ENCODE measurements at regions of chr16 and their contacts with region 1.

Region 1: DNA sequence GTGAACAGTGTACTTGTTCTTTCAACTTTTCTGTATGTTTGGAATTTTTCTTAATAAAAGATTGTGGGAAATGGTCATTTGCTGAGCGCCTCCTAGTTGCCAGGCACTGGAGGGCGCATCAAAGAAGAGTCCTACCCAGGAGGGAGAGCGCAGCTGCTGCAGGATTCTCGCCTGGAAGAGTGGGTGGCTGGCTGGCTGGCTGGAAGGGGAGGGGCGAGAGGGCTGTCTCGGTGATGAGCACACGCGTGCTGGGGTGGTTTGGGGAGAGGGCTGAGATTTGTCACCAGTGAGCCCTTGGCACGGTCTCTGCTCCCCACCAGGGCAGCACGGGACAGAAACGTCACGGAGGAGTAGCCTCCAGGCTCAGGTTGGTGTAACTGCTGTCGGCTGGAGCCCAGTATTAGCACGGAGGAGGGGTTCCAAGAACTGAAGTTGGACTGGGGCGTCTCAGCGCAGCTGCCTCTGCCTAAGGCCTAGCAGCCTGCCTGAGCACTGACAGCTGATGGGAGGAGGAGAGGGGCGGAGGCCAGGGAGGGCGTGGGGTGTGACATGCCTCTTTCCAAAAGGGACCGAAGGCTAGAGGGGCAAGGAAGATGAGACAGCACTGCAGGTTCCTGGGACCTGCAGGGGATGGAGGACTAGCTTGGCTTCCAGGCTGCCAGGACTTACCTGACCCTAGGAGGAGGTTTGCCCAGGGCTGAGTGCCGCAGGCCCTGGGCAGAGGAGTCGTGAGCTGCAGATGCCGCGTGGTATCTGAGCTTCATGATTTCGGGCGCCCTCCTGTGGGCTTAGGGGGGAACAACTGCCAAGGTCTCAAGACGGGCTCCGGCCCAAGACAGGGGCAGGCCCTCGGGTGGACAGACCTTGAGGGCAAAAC is 5.7 kb downstream of the LDHD start:
- DNase-seq: peak; percentile 83 to 91
- H3K4me3 ChIP-seq: peak overlapping the region in 1 of 4 experiments; percentile 31; a peak in 2 of 8 replicates
- H3K27ac ChIP-seq: no peak overlapping the region
- H3K4me1 ChIP-seq: peaks cover 9 to 52% (median 40%) of the 10 kb centered on the region in 4 experiments
- H3K27me3 ChIP-seq: no peaks in the 10 kb centered on the region
- CTCF ChIP-seq: peak; percentile 81 to 92 (median 92)
- EP300 ChIP-seq: no peak
- POLR2A ChIP-seq: no peak; a peak in 1 of 3 replicates
- RAD21 ChIP-seq: peak; percentile 88 to 95

Region 2: DNA sequence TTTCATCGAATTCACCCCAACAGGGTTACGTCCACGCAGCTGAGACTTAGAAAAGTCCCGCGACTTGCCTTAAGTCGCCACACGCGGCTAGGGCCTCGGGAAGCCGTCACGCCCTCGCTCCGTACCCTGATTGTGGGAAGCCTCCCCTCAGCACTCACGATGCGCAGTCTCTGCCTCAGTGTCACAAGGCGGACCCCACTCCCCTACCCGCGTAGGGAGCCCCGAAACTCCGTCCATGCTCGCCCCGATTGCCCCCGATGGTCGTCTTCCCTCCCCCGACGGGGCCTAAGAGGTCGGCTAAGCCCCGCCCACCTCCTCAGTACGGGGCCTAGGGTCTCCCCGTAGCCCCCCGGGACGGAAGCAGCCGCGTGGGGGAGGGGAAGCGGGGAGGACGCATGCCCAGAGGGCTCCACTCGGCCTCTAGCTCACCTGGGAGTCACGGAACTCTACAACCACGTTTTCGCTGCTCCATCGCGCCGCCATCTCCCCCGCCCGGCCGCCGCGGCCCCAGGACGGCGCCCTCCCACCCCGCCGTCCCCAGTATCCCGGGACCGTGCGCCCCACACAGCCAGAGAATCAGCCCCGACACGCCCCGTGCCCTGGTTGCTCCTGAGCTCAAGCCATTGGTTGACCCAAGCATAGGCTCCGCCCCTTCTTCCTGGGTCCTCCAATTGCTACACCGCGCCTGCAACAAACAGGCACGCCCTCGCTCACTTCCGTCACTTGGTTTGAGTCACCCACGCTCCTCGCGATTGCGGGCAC is 126.2 kb before region 1 on chr16 and contains the start of gene WDR59:
- CTCF ChIA-PET with region 1: interaction called, 36 read pairs
- POLR2A ChIA-PET with region 1: interaction called, 3 read pairs
- DNase-seq: peak; percentile 97 to 98
- H3K4me3 ChIP-seq: peak within 1 kb of the TSS; percentile 76 to 91 (median 87)
- H3K27ac ChIP-seq: peak within 1 kb of the TSS; percentile 86
- H3K4me1 ChIP-seq: no peaks in the 10 kb centered on the region
- H3K27me3 ChIP-seq: no peaks in the 10 kb centered on the region
- CTCF ChIP-seq: no peak
- EP300 ChIP-seq: no peak
- POLR2A ChIP-seq: peak; percentile 82 to 84
- RAD21 ChIP-seq: no peak
- total RNA-seq, gene WDR59: 107 and 124 TPM in 2 replicates

Region 3: DNA sequence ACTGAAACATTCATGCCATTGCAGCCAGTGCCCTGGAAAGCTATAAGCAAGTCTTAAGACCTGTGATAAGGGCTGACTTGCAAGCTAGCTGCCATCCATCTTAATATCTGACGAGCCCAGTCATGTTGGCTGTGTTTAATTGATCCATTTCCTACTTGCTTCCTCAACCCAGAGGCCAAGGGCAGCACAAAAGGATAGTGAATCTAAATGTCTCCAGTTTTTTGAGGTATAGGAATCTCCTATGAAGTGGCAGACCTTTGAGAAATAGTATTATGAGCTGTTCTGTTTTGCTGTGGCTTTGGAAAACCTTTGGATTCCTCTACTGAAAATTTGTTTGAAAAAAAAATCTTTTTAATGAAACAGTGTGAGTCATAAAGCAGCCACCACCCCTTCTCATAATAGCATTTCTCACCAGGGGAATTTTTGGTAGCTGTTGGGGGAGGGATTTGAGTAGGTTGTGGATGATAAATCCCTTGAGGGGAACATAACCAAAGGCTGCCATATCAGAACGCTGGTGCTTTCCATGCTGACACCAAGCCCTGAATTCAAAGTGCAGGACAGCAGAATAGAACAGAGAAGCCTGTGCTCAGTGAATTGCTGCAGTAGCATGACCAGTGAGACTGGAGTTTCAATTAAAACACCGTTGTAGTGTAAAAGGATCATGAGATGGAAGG is 99.1 kb before region 1 on chr16:
- CTCF ChIA-PET with region 1: interaction called, 44 read pairs
- POLR2A ChIA-PET with region 1: no interaction called
- DNase-seq: no peak
- H3K4me3 ChIP-seq: no peak overlapping the region
- H3K27ac ChIP-seq: no peak overlapping the region
- H3K4me1 ChIP-seq: peaks cover 0 to 14% (median 3%) of the 10 kb centered on the region in 4 experiments; a peak in 4 of 7 replicates
- H3K27me3 ChIP-seq: no peaks in the 10 kb centered on the region
- CTCF ChIP-seq: no peak
- EP300 ChIP-seq: no peak
- POLR2A ChIP-seq: no peak
- RAD21 ChIP-seq: no peak

Region 4: GRCh38 chr16:75080205-75081029 is 30.5 kb before region 1 on chr16:
- CTCF ChIA-PET with region 1: interaction called, 90 read pairs
- POLR2A ChIA-PET with region 1: interaction called, 3 read pairs
- DNase-seq: no peak
- H3K4me3 ChIP-seq: peak overlapping the region in 1 of 4 experiments; percentile 39; a peak in 4 of 8 replicates
- H3K27ac ChIP-seq: no peak overlapping the region
- H3K4me1 ChIP-seq: peaks cover 0 to 12% (median 10%) of the 10 kb centered on the region in 4 experiments; a peak in 6 of 7 replicates
- H3K27me3 ChIP-seq: no peaks in the 10 kb centered on the region
- CTCF ChIP-seq: no peak
- EP300 ChIP-seq: peak in 1 of 2 experiments; percentile 29; a peak in 1 of 3 replicates
- POLR2A ChIP-seq: no peak
- RAD21 ChIP-seq: no peak

Region 5: DNA sequence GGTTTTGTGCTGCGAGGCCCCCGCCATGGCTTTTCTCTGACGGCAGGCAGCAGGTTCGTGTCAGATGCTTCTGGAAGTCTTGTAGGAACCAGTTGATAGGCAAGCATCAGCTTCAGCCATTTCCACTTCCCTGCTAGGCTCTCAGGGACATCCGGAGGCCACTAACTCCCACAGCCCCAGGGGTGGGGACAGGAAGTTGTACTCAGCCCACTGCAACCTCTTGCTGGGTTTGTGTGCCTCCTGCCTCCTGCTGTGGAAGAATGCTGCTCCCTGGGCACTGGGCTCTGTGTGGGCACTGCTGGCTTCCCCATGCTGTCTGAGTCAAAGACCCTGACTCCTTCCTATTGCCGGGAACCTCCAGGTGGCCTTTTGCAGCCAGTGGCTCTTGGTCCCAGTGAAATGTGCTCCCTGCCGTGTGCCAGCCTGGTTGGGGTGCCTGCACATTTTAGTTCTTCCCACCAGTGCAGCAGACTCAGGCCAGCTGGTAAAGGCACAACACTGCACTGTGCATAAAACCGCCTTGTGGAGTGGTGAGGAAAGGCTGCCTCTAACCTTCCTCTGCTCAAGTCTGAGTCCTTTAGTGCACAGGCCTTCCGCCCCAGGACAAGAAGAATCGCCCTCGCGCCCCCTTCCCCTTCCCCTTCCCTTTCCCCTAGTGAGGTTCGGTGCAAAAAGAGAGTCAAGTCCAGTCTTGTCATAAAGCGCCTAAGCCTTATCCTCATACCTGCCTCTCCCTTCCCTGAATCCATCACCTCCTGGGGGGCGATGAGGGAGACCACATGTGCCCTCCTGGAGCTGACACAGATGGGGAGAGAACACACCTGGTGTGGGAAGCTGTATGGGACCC is 10.9 kb before region 1 on chr16:
- CTCF ChIA-PET with region 1: interaction called, 133 read pairs
- POLR2A ChIA-PET with region 1: interaction called, 42 read pairs
- DNase-seq: no peak
- H3K4me3 ChIP-seq: no peak overlapping the region
- H3K27ac ChIP-seq: no peak overlapping the region
- H3K4me1 ChIP-seq: peaks cover 9 to 45% (median 32%) of the 10 kb centered on the region in 4 experiments
- H3K27me3 ChIP-seq: no peaks in the 10 kb centered on the region
- CTCF ChIP-seq: no peak
- EP300 ChIP-seq: no peak
- POLR2A ChIP-seq: no peak
- RAD21 ChIP-seq: no peak

Region 6: DNA sequence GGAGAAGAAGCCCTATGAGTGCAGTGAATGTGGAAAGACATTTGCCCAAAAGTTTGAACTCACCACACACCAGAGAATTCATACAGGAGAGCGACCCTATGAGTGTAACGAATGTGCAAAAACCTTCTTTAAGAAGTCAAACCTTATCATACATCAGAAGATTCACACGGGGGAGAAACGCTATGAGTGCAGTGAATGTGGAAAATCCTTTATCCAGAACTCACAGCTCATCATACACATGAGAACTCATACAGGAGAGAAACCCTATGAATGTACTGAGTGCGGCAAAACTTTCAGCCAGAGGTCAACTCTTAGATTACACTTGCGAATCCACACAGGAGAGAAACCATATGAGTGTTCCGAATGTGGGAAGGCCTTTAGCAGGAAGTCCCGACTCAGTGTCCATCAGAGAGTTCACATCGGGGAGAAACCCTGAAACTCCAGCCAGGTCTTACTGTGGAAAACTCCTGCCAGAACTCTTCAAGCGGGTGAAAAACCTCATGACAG is 59.1 kb after region 1 on chr16:
- CTCF ChIA-PET with region 1: no interaction called
- POLR2A ChIA-PET with region 1: no interaction called
- DNase-seq: no peak
- H3K4me3 ChIP-seq: no peak overlapping the region
- H3K27ac ChIP-seq: no peak overlapping the region
- H3K4me1 ChIP-seq: no peaks in the 10 kb centered on the region
- H3K27me3 ChIP-seq: no peaks in the 10 kb centered on the region
- CTCF ChIP-seq: no peak
- EP300 ChIP-seq: no peak
- POLR2A ChIP-seq: no peak
- RAD21 ChIP-seq: no peak